Esophagus muscularis mucosa (tissue), 4 donors: ENCODE measurements at regions of chr1 and their contacts with region 1.

Region 1: GRCh38 chr1:61077676-61078541 is 4.5 kb upstream of the NFIA start:
- DNase-seq: peak; percentile 95
- H3K4me3 ChIP-seq: peak overlapping the region; percentile 54 to 72 (median 66)
- H3K27ac ChIP-seq: peak overlapping the region; percentile 97 to 98 (median 98)
- H3K4me1 ChIP-seq: peaks cover 37 to 49% (median 49%) of the 10 kb centered on the region in 4 donors
- H3K27me3 ChIP-seq: no peaks in the 10 kb centered on the region
- CTCF ChIP-seq: peak in 1 of 3 experiments; percentile 13
- EP300 ChIP-seq: no peak
- POLR2A ChIP-seq: no peak

Region 2: DNA sequence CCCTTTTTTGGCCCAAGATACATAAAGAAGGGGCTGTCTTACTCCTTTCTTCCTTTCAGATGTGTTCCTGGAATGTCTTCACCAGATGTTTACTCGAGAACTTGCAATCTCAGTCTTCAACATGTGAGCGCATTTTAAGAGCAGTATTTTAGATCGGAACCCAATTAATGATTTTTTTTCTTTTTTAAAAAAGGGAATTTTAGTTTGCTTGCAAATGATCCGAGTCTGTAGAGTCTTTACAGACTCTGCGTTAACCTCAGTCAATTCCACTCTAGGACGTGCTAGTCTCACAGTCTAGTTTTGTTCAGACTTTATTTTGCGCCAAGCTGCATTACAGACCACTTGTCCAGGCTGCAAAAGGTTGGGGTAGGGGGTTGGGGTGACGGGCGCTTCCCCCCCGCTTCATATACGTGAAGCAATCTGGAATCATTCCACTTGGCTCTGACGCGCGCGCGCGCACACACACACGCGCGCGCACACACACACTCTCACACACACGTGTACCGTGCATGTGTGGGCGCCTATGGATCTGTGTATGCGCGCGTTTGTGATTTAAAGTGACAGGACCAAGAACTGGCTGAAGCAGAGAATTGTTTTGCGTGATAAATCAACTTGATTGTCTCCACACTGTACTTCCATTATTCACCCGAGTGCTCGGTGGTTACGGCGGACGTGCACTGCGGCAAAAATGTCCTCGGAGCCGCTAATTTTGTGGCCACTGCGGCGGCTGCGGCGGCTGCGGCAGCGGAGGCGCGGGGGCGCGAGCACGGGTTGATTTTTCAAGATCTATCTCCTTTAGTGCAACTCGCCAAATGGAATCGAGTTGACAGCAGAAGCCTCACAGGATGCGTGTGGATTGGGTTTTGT is 21.1 kb before region 1 on chr1:
- intact Hi-C with region 1: loop called (anchors 2 kb)
- DNase-seq: no peak
- H3K4me3 ChIP-seq: peak overlapping the region; percentile 64 to 76 (median 74)
- H3K27ac ChIP-seq: peak overlapping the region; percentile 93 to 99 (median 98)
- H3K4me1 ChIP-seq: peaks cover 29 to 62% (median 62%) of the 10 kb centered on the region in 4 donors
- H3K27me3 ChIP-seq: no peaks in the 10 kb centered on the region
- CTCF ChIP-seq: no peak
- EP300 ChIP-seq: no peak
- POLR2A ChIP-seq: no peak

Region 3: DNA sequence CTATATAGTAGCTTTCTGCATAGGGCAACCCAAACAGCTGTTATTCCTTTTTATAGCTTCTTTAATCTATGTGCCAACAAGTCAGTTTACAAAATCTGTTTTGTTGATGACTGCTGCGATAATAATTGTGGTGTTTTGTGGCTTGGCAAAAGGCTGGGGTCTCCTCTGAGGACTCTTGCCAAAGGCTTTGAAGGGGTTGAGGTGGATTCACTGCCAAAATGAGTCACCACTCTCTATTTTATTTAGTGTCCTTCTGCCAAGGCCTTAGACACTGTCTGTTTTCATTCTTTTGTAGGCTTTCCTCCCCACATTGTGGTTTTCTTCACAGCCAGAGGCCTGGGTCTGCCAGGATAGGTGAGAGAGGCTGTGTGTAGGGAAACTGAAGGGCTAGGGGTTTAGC is 166.2 kb after region 1 on chr1:
- intact Hi-C with region 1: loop called (anchors 10 kb)
- DNase-seq: no peak
- H3K4me3 ChIP-seq: no peak overlapping the region
- H3K27ac ChIP-seq: peak overlapping the region; percentile 77 to 84 (median 78)
- H3K4me1 ChIP-seq: peaks cover 34 to 75% (median 70%) of the 10 kb centered on the region in 4 donors
- H3K27me3 ChIP-seq: no peaks in the 10 kb centered on the region
- CTCF ChIP-seq: no peak
- EP300 ChIP-seq: no peak
- POLR2A ChIP-seq: no peak

Region 4: DNA sequence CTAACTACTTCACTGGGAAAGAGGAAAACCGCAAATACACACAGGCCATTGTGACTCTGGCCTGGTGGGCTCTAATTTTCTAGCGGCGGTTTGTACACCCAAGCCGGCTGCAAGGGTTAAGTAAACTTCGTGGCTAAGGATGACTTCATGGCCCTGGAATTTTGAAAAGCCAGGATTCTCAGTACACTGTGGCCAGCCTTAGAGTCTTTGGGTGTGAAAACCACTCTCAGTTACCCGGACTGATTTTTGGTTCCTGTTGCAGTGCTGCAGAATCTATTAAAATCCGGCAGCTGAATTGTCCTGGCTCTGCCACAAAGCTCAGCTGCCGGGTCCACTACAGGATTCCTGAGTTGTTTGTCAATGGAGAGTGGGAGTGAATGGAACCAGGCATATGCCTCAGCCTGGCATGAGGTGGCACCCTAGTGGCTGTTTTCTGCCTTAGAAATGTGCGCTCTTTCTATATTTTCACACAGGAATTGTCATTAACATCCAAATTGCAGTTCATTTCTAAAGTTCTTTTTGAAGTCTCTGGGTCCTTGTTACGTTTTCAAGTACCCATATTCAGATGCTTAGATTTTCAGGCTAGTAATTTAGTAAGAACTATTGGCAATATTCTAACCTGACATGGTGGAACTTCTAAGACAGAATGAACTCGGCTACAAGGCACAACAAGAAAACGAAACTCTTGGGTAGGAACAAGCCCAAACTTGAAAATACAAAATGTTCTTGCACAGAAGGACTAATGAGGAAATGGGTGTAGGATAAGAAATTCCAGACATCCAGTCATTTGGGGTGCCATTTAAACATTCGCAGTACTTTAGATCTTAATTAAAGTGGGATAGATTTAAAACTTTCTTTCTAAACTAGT is 260.3 kb after region 1 on chr1:
- intact Hi-C with region 1: loop called (anchors 2 kb)
- DNase-seq: no peak
- H3K4me3 ChIP-seq: peak overlapping the region; percentile 15 to 37 (median 26)
- H3K27ac ChIP-seq: peak overlapping the region; percentile 73 to 82 (median 78)
- H3K4me1 ChIP-seq: peaks cover 35 to 57% (median 50%) of the 10 kb centered on the region in 4 donors
- H3K27me3 ChIP-seq: no peaks in the 10 kb centered on the region
- CTCF ChIP-seq: peak; percentile 71 to 75 (median 74)
- EP300 ChIP-seq: no peak
- POLR2A ChIP-seq: no peak